Mammary epithelial cell (primary cell): ENCODE measurements at regions of chr7 and their contacts with region 1.

Region 1: DNA sequence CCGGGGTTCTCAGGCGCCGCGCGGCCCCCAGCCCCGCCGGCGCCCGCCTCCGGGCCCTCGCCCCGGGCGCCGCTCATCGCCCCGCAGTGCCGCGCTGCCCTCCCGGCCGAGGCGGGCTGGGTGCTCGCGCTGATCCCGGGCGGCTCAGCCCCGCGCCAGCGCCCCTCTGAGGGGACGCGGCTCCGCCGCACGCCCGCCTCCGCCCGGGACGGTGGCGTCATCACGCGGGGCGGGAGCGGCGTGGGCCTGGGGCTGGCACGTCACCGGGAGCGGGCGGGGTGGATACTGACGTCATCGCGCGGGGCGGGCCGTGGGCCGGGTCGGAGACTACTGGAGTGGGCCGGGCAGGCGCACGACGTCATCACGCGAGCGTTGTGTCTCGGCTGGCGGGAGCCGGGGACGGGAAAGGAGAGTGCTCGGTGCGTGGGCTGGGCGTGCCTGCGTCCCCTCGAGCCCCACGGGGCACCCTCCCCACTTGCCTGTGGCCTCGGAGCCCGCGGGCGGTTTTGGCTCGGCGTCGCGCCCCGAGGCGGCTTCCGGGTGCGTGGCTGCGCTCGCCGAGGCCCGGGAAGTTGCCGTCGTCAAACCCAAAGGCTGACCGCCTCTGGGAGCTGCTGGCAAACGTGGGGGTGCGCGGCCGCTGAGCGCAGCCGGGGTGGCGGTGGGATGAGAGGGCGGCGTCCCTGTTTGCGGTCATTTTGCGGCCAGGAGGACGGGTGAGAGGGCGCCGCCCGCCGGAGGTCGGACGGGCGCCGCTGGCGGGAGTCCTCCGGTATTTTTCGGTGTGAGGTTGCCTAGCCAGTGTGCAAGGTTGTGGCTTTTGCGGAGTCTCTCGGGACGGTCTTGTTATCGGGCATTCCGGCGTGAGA is at the start of gene ESYT2:
- DNase-seq: peak; percentile 96
- H3K4me3 ChIP-seq: peak within 1 kb of the TSS; percentile 89 to 97 (median 97)
- H3K27ac ChIP-seq: peak within 1 kb of the TSS; percentile 96
- H3K4me1 ChIP-seq: peaks cover 13% of the 10 kb centered on the region
- H3K27me3 ChIP-seq: no peaks in the 10 kb centered on the region
- CTCF ChIP-seq: peak in 1 of 2 donors; percentile 39
- total RNA-seq, gene ESYT2: 78.9 to 101 TPM

Region 2: DNA sequence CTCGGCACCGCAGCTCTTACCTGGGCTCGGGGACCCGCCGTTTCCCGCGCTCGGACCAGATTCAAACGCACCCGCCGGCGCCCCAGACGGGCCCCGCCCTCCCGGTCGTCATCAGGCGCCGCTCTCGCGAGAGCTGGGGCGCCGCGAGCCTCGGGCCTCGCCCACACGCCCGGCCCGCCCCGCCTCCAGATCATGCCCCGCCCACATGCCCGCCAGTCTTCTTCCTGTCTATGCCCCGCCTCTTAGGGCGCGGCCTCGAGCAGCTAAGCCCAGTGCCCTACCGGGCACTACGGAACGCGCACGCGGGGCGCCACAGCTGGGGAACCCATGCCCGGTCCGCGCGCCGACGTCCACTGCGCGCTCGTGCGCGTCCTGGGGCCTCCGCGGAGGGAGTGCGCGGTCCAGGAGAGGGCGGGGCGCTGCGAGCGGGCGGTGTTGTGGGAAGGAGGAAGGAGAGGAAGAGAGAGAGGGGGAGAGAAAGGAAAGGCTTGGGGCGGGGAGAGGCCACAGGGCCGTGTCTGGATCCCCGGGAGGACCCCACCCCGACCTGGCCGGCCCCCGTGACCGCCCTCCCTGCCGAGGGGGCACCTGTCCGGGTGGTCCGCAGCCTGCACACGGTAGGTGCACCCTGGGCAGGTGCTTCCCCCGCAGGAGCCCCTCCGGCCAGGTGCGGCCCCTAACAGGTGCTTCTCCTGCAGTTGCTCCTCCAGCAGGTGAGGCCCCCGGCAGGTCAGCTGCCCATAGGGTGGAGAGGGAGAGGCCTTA is 124.7 kb before region 1 on chr7 and contains the start of gene NCAPG2:
- CTCF ChIA-PET with region 1: no interaction called
- dilution Hi-C with region 1: no loop called
- in situ Hi-C with region 1: no loop called
- intact Hi-C with region 1: loop called (anchors 1 kb)
- DNase-seq: peak; percentile 98
- H3K4me3 ChIP-seq: peak within 1 kb of the TSS; percentile 80 to 100 (median 90)
- H3K27ac ChIP-seq: peak within 1 kb of the TSS; percentile 85
- H3K4me1 ChIP-seq: peaks cover 16% of the 10 kb centered on the region
- H3K27me3 ChIP-seq: no peaks in the 10 kb centered on the region
- CTCF ChIP-seq: peak in 1 of 2 donors; percentile 36
- total RNA-seq, gene NCAPG2: 3.2 to 42.0 TPM

Region 3: DNA sequence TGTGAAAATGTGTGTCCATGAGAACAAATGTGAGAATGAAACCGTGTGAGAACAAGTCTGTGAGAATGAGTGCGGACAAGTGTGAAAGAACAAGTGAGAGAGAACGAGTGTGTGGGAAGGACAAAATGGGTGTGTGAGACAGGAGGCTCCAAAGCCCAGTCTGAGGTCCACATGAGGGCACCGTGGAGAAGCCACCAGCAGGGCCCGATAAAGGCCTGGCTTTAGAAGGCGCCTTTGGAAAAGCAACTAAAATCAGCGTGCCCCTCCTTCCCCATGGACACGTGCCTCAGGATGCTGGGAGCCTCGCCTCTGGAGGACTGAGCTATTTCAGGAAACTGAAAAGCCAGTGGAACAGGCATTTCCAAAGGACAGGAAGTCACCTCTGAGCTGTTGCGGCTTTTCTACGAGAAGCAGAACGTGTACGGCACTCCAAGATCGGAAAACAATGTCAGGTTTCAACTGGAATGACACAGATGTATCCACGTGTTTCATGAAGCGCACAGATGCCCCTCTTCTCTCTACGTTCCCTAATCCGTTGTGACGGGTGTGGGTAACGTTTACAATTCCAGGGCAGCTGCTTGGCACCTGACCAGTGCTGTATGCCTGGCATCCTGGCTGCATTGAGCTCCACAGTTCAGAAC is 46.7 kb before region 1 on chr7:
- CTCF ChIA-PET with region 1: no interaction called
- dilution Hi-C with region 1: no loop called
- in situ Hi-C with region 1: no loop called
- intact Hi-C with region 1: loop called (anchors 2 kb)
- DNase-seq: no peak
- H3K4me3 ChIP-seq: no peak overlapping the region
- H3K27ac ChIP-seq: no peak overlapping the region
- H3K4me1 ChIP-seq: no peaks in the 10 kb centered on the region
- H3K27me3 ChIP-seq: no peaks in the 10 kb centered on the region
- CTCF ChIP-seq: peak; percentile 47 to 48

Region 4: GRCh38 chr7:158802473-158803202 is 26.9 kb before region 1 on chr7:
- CTCF ChIA-PET with region 1: no interaction called
- dilution Hi-C with region 1: no loop called
- in situ Hi-C with region 1: no loop called
- intact Hi-C with region 1: loop called (anchors 2 kb)
- DNase-seq: peak; percentile 36
- H3K4me3 ChIP-seq: peak overlapping the region in 1 of 3 experiments; percentile 2
- H3K27ac ChIP-seq: peak overlapping the region; percentile 60
- H3K4me1 ChIP-seq: peaks cover 23% of the 10 kb centered on the region
- H3K27me3 ChIP-seq: no peaks in the 10 kb centered on the region
- CTCF ChIP-seq: no peak

Region 5: GRCh38 chr7:158856883-158857668 is 27.5 kb after region 1 on chr7:
- CTCF ChIA-PET with region 1: no interaction called
- dilution Hi-C with region 1: no loop called
- in situ Hi-C with region 1: no loop called
- intact Hi-C with region 1: loop called (anchors 1 kb)
- DNase-seq: no peak
- H3K4me3 ChIP-seq: peak overlapping the region; percentile 55 to 72 (median 66)
- H3K27ac ChIP-seq: peak overlapping the region; percentile 86
- H3K4me1 ChIP-seq: peaks cover 14% of the 10 kb centered on the region
- H3K27me3 ChIP-seq: no peaks in the 10 kb centered on the region
- CTCF ChIP-seq: no peak

Region 6: GRCh38 chr7:158976849-158977593 is 147.4 kb after region 1 on chr7:
- CTCF ChIA-PET with region 1: no interaction called
- dilution Hi-C with region 1: no loop called
- in situ Hi-C with region 1: no loop called
- intact Hi-C with region 1: loop called (anchors 2 kb)
- DNase-seq: peak; percentile 63
- H3K4me3 ChIP-seq: peak overlapping the region; percentile 14 to 29 (median 20)
- H3K27ac ChIP-seq: no peak overlapping the region
- H3K4me1 ChIP-seq: peaks cover 3% of the 10 kb centered on the region
- H3K27me3 ChIP-seq: no peaks in the 10 kb centered on the region
- CTCF ChIP-seq: peak; percentile 86 to 91